Cardiac septum (tissue), 1 donor: ENCODE measurements at regions of chr9 and their contacts with region 1.

Region 1: GRCh38 chr9:109640580-109641371 is 139.2 kb upstream of the PALM2AKAP2 start:
- DNase-seq: peak; percentile 75

Region 2: GRCh38 chr9:109590945-109591344 is 49.8 kb before region 1 on chr9:
- intact Hi-C with region 1: loop called (anchors 5 kb)
- DNase-seq: peak; percentile 80

Region 3: GRCh38 chr9:109894921-109895758 is 254.4 kb after region 1 on chr9:
- intact Hi-C with region 1: loop called (anchors 5 kb)
- DNase-seq: no peak

Region 4: DNA sequence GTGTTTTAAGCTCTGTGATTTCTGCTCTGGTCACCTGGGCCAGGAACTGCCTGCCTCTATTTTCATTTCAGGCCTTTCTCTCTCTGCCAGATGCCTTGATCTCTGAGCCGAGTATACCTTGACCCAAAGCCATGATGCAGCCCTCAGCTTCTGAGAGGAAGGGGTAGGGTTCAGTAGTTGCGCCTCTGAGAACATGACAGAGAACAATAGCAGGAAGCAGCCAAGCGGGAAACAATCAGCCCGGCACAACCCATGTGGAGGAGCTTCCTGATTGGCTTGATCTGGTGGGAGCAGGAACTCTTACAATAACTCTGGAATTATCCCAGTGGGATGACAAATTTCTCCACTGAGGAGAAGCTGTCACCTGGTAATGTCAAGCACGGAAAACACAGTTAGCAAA is 266.6 kb after region 1 on chr9:
- intact Hi-C with region 1: no loop called
- DNase-seq: peak; percentile 84